ENCODE measurements at regions of chr17 and their contacts with region 1.

Region 1: DNA sequence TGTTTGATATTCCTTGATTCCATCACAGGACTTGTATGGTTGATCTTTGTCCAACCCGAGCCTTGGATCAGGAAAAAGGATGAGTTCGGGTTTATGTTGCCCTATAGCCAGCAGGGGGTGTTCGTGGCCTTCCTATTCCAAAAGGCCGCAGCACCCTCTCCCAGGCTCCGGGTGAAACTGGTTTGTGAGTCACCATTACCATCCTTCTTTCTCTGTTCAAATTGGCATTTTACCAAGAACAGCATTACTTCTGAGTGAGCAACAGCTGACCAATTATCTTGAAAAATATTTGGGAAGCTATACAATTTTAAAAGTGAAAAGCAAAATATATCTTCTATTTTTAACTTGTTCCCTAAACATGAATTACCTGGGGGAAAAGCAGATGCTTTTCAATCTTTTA is 24.3 kb upstream of the KRT20 start:
- DNase-seq: peak; percentile 95
- ATAC-seq: peak; percentile 88
- H3K4me3 ChIP-seq: no peak overlapping the region
- H3K27ac ChIP-seq: peak overlapping the region; percentile 77
- H3K4me1 ChIP-seq: peaks cover 57 to 69% of the 10 kb centered on the region in 2 experiments
- H3K27me3 ChIP-seq: no peaks in the 10 kb centered on the region
- CTCF ChIP-seq: peak; percentile 76 to 88 (median 81)
- POLR2A ChIP-seq: no peak
- RAD21 ChIP-seq: peak; percentile 99

Region 2: GRCh38 chr17:40803617-40804082 is 105.7 kb before region 1 on chr17:
- CTCF ChIA-PET with region 1: no interaction called
- POLR2A ChIA-PET with region 1: no interaction called
- RAD21 ChIA-PET with region 1: no interaction called
- intact Hi-C with region 1: loop called (anchors 1 kb)
- DNase-seq: peak; percentile 74
- ATAC-seq: peak; percentile 99
- H3K4me3 ChIP-seq: no peak overlapping the region
- H3K27ac ChIP-seq: no peak overlapping the region
- H3K4me1 ChIP-seq: peaks cover 3 to 9% of the 10 kb centered on the region in 2 experiments; a peak in 3 of 4 replicates
- H3K27me3 ChIP-seq: no peaks in the 10 kb centered on the region
- CTCF ChIP-seq: peak; percentile 82 to 96 (median 88)
- POLR2A ChIP-seq: no peak
- RAD21 ChIP-seq: peak; percentile 98

Region 3: GRCh38 chr17:40862985-40863733 is 46.2 kb before region 1 on chr17:
- CTCF ChIA-PET with region 1: no interaction called
- POLR2A ChIA-PET with region 1: no interaction called
- RAD21 ChIA-PET with region 1: no interaction called
- intact Hi-C with region 1: no loop called
- DNase-seq: no peak
- ATAC-seq: no peak
- H3K4me3 ChIP-seq: no peak overlapping the region
- H3K27ac ChIP-seq: no peak overlapping the region
- H3K4me1 ChIP-seq: peaks cover 0 to 3% of the 10 kb centered on the region in 2 experiments; a peak in 1 of 4 replicates
- H3K27me3 ChIP-seq: no peaks in the 10 kb centered on the region
- CTCF ChIP-seq: no peak
- POLR2A ChIP-seq: no peak
- RAD21 ChIP-seq: no peak

Region 4: DNA sequence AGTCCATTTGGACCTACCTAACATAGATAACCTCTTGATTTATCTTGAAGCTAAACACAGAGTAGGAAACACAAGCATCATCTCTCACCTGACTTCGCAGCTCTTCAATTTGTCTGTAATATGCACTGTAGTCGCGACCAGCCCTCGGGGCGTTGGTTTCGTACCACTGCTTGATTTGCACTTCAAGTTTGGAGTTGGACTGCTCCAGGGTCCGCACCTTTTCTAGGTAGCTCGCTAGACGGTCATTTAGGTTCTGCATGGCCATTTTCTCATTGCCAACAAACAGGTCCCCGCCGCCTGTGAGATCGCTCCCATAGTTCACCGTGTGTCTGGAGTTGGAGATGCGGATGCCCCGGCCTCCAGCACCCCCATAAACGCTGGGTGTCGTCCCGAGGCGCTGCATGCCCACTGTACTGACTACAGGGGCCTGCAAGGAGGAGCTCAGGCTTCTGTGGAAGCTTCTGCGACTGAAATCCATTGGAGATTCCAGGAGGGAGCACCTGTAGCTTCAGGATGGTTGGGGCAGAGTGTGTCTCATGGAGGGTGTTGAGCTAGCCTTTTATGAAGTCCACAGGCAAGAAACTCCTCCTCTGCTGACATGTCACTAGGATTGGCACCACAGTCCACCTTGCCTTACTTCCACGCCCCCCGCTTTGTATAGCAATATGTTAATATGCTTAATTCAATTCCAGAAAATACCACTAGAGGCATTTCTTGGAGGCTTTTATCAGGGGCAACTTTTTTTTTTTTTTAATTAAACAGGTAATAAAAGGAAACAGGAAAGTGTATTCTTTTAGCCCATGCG is 24.4 kb before region 1 on chr17 and contains the start of gene KRT20:
- CTCF ChIA-PET with region 1: no interaction called
- POLR2A ChIA-PET with region 1: no interaction called
- RAD21 ChIA-PET with region 1: no interaction called
- intact Hi-C with region 1: no loop called
- DNase-seq: no peak
- ATAC-seq: peak; percentile 73
- H3K4me3 ChIP-seq: no peak within 1 kb of the TSS
- H3K27ac ChIP-seq: no peak within 1 kb of the TSS
- H3K4me1 ChIP-seq: peaks cover 0 to 13% of the 10 kb centered on the region in 2 experiments; a peak in 2 of 4 replicates
- H3K27me3 ChIP-seq: no peaks in the 10 kb centered on the region
- CTCF ChIP-seq: peak in 2 of 3 experiments; percentile 32 to 52; a peak in 2 of 6 replicates
- POLR2A ChIP-seq: no peak
- RAD21 ChIP-seq: no peak
- total RNA-seq, gene KRT20: 1.5 TPM

Region 5: GRCh38 chr17:41322094-41322902 is 412.9 kb after region 1 on chr17:
- CTCF ChIA-PET with region 1: interaction called, 15 read pairs
- POLR2A ChIA-PET with region 1: interaction called, 3 read pairs
- RAD21 ChIA-PET with region 1: no interaction called
- intact Hi-C with region 1: loop called (anchors 1 kb)
- DNase-seq: peak; percentile 35
- ATAC-seq: peak; percentile 46
- H3K4me3 ChIP-seq: no peak overlapping the region
- H3K27ac ChIP-seq: peak overlapping the region; percentile 35
- H3K4me1 ChIP-seq: peaks cover 5 to 18% of the 10 kb centered on the region in 2 experiments; a peak in 3 of 4 replicates
- H3K27me3 ChIP-seq: no peaks in the 10 kb centered on the region
- CTCF ChIP-seq: peak; percentile 52 to 67 (median 61); a peak in 5 of 6 replicates
- POLR2A ChIP-seq: no peak
- RAD21 ChIP-seq: peak; percentile 82

Region 6: GRCh38 chr17:41403798-41404671 is 494.7 kb after region 1 on chr17:
- CTCF ChIA-PET with region 1: no interaction called
- POLR2A ChIA-PET with region 1: no interaction called
- RAD21 ChIA-PET with region 1: interaction called in 1 of 2 experiments, 7 read pairs
- intact Hi-C with region 1: loop called (anchors 1 kb)
- DNase-seq: peak; percentile 99
- ATAC-seq: peak; percentile 84
- H3K4me3 ChIP-seq: no peak overlapping the region
- H3K27ac ChIP-seq: peak overlapping the region; percentile 78
- H3K4me1 ChIP-seq: peaks cover 43 to 73% of the 10 kb centered on the region in 2 experiments
- H3K27me3 ChIP-seq: no peaks in the 10 kb centered on the region
- CTCF ChIP-seq: no peak
- POLR2A ChIP-seq: no peak
- RAD21 ChIP-seq: peak; percentile 56

Region 7: DNA sequence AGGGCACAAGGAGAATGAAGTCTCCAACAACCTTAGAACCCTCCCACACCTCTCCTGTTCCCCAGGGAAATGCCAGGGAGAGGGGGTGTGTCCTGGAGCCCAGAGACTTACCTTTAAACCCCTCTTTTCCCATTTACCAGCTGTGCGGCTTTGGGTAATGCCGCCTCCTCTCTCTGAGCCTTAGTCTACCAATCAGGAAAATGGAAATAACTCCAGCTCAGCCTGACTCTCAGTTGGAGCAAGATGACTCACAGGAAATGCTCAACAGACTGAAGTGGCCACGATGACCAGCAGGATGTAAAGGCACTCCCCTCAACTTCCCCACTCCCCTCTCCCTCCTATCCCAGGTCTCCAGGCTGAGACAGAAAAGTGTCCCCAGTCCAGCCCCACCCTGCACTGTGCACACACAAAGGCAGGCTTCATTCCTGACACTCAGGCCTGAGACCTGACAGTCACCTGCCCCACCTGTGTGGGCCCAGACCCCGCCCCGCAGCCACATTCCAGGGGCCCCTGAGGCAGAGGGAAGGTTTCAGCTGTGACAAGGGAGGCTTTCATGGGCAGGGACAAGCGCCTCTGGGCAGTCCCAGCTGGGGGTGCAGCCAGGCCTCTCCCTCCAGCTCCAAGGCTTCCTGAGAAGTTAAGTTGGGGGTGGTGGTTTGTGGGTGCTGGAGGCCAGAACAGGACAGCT is 612.4 kb after region 1 on chr17:
- CTCF ChIA-PET with region 1: interaction called, 11 read pairs
- POLR2A ChIA-PET with region 1: interaction called, 4 read pairs
- RAD21 ChIA-PET with region 1: no interaction called
- intact Hi-C with region 1: loop called (anchors 2 kb)
- DNase-seq: peak; percentile 97
- ATAC-seq: peak; percentile 65
- H3K4me3 ChIP-seq: peak overlapping the region; percentile 36 to 47
- H3K27ac ChIP-seq: peak overlapping the region; percentile 99
- H3K4me1 ChIP-seq: peaks cover 74 to 91% of the 10 kb centered on the region in 2 experiments
- H3K27me3 ChIP-seq: no peaks in the 10 kb centered on the region
- CTCF ChIP-seq: no peak; a peak in 1 of 6 replicates
- POLR2A ChIP-seq: no peak
- RAD21 ChIP-seq: no peak

Region 8: GRCh38 chr17:41648411-41649195 is 739.3 kb after region 1 on chr17:
- CTCF ChIA-PET with region 1: no interaction called
- POLR2A ChIA-PET with region 1: no interaction called
- RAD21 ChIA-PET with region 1: no interaction called
- intact Hi-C with region 1: loop called (anchors 5 kb)
- DNase-seq: peak; percentile 77
- ATAC-seq: peak; percentile 81
- H3K4me3 ChIP-seq: peak overlapping the region; percentile 38 to 53
- H3K27ac ChIP-seq: peak overlapping the region; percentile 41
- H3K4me1 ChIP-seq: peaks cover 30 to 77% of the 10 kb centered on the region in 2 experiments
- H3K27me3 ChIP-seq: no peaks in the 10 kb centered on the region
- CTCF ChIP-seq: peak; percentile 90 to 98 (median 95)
- POLR2A ChIP-seq: no peak
- RAD21 ChIP-seq: peak; percentile 92